Right ventricle myocardium inferior (tissue), 1 donor: ENCODE measurements at regions of chr6 and their contacts with region 1.

Region 1: DNA sequence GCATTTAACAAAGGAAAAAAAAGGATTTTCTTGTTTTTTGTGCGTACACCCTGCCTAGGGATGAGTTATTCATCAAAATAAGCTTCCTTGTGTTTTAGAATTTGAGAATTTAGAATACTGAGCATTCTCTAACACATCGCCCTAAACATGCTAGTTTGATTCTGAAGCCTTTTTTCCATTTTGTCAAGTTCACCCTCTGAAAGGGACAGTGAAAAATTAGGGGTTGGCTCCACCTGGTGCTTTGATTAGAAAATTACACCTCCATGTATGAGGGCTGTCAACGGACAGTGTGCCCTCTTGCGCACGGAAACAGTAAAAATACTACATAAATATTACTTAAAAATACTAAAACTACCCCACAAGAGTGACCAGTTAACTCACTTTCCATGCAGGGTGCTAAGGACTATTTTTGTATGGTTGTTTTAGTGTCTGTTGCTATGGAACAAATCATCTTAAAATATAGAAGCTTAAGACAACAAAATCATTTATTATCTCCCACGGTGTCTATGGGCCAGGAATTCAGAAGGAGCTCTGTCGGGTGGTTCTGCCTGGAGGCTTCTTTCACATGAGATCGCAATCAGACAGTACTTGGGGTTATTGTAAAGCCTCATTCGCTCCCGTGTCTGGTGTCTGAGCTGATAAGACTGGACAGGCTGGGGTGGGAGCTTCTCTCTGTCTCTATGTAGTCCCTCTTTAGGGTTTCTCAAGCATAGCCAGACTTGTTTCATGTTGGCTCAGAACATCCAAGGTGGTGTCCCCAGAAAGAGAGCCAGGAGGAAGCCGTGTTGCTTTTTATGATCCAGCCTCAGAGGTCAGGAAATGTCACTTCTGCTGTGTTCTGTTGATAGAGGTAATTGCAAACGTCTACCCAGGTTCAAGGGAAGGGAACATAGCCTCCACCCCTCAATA is 41.1 kb upstream of the TMEM170B start:
- DNase-seq: no peak
- ATAC-seq: peak; percentile 89

Region 2: GRCh38 chr6:10954590-10955010 is 541.8 kb before region 1 on chr6:
- intact Hi-C with region 1: loop called (anchors 10 kb)
- DNase-seq: peak; percentile 87
- ATAC-seq: peak; percentile 60

Region 3: DNA sequence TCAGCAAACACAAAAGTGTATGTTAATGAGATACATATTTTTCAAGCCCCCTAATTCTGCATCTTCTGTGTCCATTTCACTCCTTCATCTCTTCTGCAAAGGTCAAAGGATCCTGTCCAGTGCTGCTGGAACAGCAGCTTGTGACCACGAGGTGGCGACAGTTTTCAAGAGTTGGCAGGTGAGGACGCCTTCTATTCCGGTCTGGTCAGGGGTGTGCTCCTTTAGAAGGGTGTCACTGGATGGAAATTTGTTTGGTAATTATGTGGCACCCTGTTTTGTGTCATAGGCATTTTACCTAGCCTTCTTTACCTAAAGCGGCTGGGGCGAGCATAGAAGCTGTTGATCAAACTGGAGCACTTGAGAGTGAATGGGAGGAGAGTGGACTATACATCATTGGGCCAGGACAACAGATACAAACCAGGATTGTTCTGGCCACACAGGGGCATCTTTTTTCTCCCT is 352.0 kb before region 1 on chr6:
- intact Hi-C with region 1: loop called (anchors 1 kb)
- DNase-seq: peak; percentile 72
- ATAC-seq: peak; percentile 89

Region 4: DNA sequence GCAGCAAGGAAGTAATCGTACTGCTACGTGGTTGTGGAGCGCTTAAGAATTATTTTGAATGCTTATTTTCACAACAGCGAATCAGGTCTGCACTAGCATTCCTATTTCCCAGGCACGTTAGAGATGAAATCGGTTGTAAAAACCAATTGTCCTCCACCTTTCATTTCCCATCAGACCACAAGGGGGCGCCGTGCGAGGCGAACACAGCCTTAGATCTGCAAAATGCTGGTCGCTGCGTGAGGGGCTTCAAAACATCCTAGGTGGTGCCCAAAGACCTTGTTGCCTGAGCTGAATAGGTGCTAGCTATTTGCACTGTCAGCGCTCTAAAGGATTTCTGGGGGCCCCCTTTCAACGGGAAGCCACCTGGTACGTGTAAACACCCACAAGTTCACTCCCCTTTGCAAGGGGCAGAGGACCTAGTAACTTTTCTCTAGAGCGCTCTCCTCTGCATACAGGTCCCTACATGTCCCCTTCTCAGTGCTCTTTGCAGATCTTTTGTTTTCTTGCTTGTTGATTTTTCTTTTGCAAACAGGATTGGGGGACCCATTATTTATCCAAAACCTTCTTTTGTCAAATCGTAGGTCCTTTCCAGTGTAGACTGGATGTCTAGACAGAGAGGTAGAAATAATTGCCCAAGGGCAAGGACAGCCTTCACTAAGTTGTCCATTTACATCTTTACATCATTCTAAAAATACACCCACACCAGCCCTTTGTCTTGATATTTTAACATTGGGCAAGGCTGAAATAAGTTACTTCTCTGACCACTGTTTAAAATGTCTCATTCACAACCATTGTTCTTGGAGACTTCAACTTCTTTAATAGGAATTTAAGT is 323.7 kb before region 1 on chr6:
- intact Hi-C with region 1: loop called (anchors 10 kb)
- DNase-seq: peak; percentile 83
- ATAC-seq: no peak

Region 5: GRCh38 chr6:11224252-11224965 is 272.0 kb before region 1 on chr6:
- intact Hi-C with region 1: no loop called
- DNase-seq: no peak
- ATAC-seq: no peak

Region 6: GRCh38 chr6:11366183-11366933 is 130.0 kb before region 1 on chr6:
- intact Hi-C with region 1: loop called (anchors 10 kb)
- DNase-seq: no peak
- ATAC-seq: no peak

Region 7: GRCh38 chr6:11575408-11576033 is 79.1 kb after region 1 on chr6:
- intact Hi-C with region 1: loop called (anchors 5 kb)
- DNase-seq: no peak
- ATAC-seq: peak; percentile 90

Region 8: DNA sequence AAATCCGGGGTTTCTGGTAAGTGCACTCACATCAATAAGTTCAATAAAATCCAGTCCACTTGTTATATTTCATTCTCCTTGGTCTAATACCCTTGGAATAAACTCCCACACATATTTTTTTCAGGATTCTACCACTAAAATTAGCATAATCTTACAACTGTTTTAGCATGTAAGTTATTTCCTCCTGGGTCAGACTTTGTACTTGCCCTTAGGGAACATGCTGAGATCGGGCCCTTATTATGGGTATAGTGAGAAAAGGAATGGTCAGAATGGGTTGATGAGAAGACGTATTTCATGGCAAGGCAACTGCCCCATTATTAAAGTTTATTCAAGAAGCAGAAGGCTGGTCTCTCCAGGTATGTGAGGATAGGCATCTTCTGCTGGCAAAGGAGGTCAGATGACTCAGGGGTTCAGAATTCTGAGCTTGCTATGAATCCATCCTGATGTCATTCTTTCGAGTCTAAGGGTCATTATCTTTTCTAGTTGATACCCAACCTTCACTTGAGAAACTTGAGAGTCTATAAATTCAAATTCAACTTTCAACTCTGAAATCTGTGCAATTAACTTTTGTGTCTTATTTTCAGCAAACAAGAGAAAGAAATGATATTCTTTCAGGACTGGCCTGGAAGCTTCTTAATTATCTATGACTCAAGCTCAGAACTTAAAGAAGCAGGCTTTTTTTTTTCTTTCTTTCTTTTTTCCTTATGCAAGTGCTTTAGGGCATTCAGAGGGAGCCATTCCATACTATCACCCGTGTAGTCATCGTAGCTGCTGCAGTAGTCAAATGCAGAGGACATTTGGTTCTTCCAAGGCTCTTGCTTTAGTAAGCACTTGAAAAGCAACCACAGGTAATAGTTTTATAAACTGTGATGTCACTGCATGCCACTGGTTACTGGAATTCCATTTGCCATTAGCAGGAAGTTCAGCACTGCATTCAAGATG is 189.0 kb after region 1 on chr6:
- intact Hi-C with region 1: no loop called
- DNase-seq: no peak
- ATAC-seq: no peak